SK-N-SH (cell line): ENCODE measurements at regions of chr10 and their contacts with region 1.

Region 1: GRCh38 chr10:110860576-110861241 is 11.0 kb upstream of the PDCD4 start:
- DNase-seq: no peak
- H3K4me3 ChIP-seq: no peak overlapping the region
- H3K27ac ChIP-seq: peak overlapping the region in 1 of 2 experiments; percentile 45; a peak in 1 of 4 replicates
- H3K4me1 ChIP-seq: peaks cover 0 to 40% of the 10 kb centered on the region in 2 experiments; a peak in 2 of 4 replicates
- H3K27me3 ChIP-seq: no peaks in the 10 kb centered on the region
- CTCF ChIP-seq: no peak
- EP300 ChIP-seq: no peak
- RAD21 ChIP-seq: no peak

Region 2: GRCh38 chr10:110871298-110872084 is 10.8 kb after region 1 on chr10 and contains the start of gene PDCD4:
- CTCF ChIA-PET with region 1: interaction called, 5 read pairs
- POLR2A ChIA-PET with region 1: interaction called, 12 read pairs
- DNase-seq: peak; percentile 93
- H3K4me3 ChIP-seq: peak within 1 kb of the TSS; percentile 74 to 91
- H3K27ac ChIP-seq: peak within 1 kb of the TSS; percentile 88 to 97
- H3K4me1 ChIP-seq: peaks cover 0 to 30% of the 10 kb centered on the region in 2 experiments; a peak in 2 of 4 replicates
- H3K27me3 ChIP-seq: no peaks in the 10 kb centered on the region
- CTCF ChIP-seq: no peak
- EP300 ChIP-seq: peak in 1 of 2 experiments; percentile 66; a peak in 2 of 4 replicates
- RAD21 ChIP-seq: no peak
- polyA plus RNA-seq, gene PDCD4: 23.3 and 31.1 TPM in 2 replicates